IMR-90 (cell line): ENCODE measurements at regions of chr18 and their contacts with region 1.

Region 1: GRCh38 chr18:6543330-6543908 is 128.7 kb upstream of the L3MBTL4 start:
- DNase-seq: peak; percentile 55
- ATAC-seq: peak; percentile 54; the same call in 1 of the 2 replicates
- H3K4me3 ChIP-seq: no peak overlapping the region
- H3K27ac ChIP-seq: no peak overlapping the region
- H3K4me1 ChIP-seq: no peaks in the 10 kb centered on the region; the same call in 1 of the 2 replicates
- H3K27me3 ChIP-seq: no peaks in the 10 kb centered on the region
- CTCF ChIP-seq: peak; percentile 59
- POLR2A ChIP-seq: no peak
- RAD21 ChIP-seq: peak; percentile 70

Region 2: GRCh38 chr18:6569813-6570212 is 26.4 kb after region 1 on chr18:
- CTCF ChIA-PET with region 1: no interaction called
- POLR2A ChIA-PET with region 1: no interaction called
- dilution Hi-C with region 1: no loop called
- in situ Hi-C with region 1: no loop called
- intact Hi-C with region 1: no loop called
- DNase-seq: no peak
- ATAC-seq: no peak
- H3K4me3 ChIP-seq: no peak overlapping the region
- H3K27ac ChIP-seq: no peak overlapping the region
- H3K4me1 ChIP-seq: no peaks in the 10 kb centered on the region; the same call in 1 of the 2 replicates
- H3K27me3 ChIP-seq: peaks cover 2% of the 10 kb centered on the region; the same call in 1 of the 2 replicates
- CTCF ChIP-seq: no peak
- POLR2A ChIP-seq: no peak
- RAD21 ChIP-seq: no peak

Region 3: DNA sequence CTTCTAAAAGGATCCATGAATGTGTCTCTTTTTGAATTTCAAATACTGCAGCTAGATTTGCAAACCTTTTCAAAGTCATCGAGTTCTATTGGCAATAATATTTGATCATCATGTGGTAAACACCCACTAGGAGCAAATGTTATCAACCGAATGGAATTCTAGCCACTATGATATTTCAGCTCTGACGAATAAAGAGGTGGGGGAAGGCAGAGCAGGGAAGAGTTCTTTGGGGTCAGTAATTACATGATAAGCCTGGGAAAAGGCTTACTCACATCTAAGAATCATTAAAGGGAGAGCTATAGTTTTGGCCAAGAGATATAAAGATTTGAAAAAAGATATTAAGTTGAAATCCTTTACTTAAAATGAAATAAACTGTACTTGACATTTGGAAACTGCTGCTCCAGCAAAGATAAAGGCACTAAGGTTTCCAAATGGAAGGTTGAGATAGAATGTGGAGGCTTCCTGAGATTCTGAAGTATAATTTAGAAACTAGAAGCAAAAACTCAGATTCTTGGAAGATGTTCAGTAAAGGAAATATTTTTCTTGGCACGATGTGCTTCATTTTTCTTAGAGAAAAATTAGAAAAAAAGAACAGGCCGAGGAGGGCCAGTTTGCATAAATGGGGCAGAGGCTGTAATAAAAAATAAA is 81.4 kb after region 1 on chr18:
- CTCF ChIA-PET with region 1: no interaction called
- POLR2A ChIA-PET with region 1: no interaction called
- dilution Hi-C with region 1: no loop called
- in situ Hi-C with region 1: no loop called
- intact Hi-C with region 1: loop called (anchors 5 kb)
- DNase-seq: peak; percentile 71
- ATAC-seq: peak; percentile 54
- H3K4me3 ChIP-seq: no peak overlapping the region
- H3K27ac ChIP-seq: peak overlapping the region; percentile 39; the same call in 1 of the 2 replicates
- H3K4me1 ChIP-seq: peaks cover 17% of the 10 kb centered on the region
- H3K27me3 ChIP-seq: no peaks in the 10 kb centered on the region
- CTCF ChIP-seq: no peak
- POLR2A ChIP-seq: no peak
- RAD21 ChIP-seq: no peak

Region 4: GRCh38 chr18:6807515-6808257 is 264.3 kb after region 1 on chr18:
- CTCF ChIA-PET with region 1: no interaction called
- POLR2A ChIA-PET with region 1: no interaction called
- dilution Hi-C with region 1: no loop called
- in situ Hi-C with region 1: no loop called
- intact Hi-C with region 1: loop called (anchors 5 kb)
- DNase-seq: no peak
- ATAC-seq: peak; percentile 29
- H3K4me3 ChIP-seq: no peak overlapping the region
- H3K27ac ChIP-seq: no peak overlapping the region
- H3K4me1 ChIP-seq: peaks cover 3% of the 10 kb centered on the region; the same call in 1 of the 2 replicates
- H3K27me3 ChIP-seq: no peaks in the 10 kb centered on the region
- CTCF ChIP-seq: no peak
- POLR2A ChIP-seq: no peak
- RAD21 ChIP-seq: no peak

Region 5: GRCh38 chr18:6850396-6850795 is 307.0 kb after region 1 on chr18:
- CTCF ChIA-PET with region 1: no interaction called
- POLR2A ChIA-PET with region 1: interaction called, 11 read pairs
- dilution Hi-C with region 1: no loop called
- in situ Hi-C with region 1: no loop called
- intact Hi-C with region 1: no loop called
- DNase-seq: no peak
- ATAC-seq: no peak
- H3K4me3 ChIP-seq: no peak overlapping the region
- H3K27ac ChIP-seq: no peak overlapping the region
- H3K4me1 ChIP-seq: no peaks in the 10 kb centered on the region
- H3K27me3 ChIP-seq: no peaks in the 10 kb centered on the region
- CTCF ChIP-seq: no peak
- POLR2A ChIP-seq: no peak
- RAD21 ChIP-seq: no peak

Region 6: DNA sequence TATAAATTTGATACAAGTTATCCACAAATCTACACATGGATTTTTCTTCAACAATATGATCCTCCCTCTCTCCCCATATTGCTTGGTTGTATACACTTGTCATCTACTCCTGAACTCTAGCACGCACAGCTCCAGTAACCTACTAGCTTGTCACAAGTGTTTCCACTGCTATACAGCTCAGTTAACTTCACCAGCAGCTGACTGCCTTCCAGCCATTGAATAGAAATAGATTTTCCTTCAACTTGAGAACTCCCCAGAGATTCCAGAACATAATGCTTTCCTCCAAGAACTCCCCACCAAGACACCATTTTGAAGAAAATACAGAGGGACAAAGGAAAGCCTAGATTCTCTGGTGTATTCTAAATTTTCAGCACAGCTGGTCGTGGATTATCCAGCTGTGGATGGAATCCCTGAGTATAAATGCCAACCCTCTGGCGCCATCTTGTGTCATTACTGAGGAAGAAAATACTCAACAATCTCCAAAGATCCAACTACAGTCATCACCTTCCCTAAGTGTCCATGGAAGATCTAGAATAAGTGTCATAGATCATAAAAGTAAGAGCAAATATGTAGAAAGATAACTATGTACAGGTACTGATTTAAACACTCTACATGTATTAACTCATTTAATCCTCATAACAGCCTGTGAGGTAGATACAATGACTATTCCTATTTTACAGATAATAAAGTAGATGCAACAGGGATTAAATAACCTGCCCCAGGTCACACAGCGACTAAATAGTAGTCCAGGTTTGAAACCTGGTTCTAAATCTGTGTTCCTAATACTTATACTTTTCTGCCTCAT is 342.8 kb after region 1 on chr18:
- CTCF ChIA-PET with region 1: interaction called, 18 read pairs
- POLR2A ChIA-PET with region 1: no interaction called
- dilution Hi-C with region 1: no loop called
- in situ Hi-C with region 1: no loop called
- intact Hi-C with region 1: loop called (anchors 1 kb)
- DNase-seq: peak; percentile 59
- ATAC-seq: peak; percentile 83
- H3K4me3 ChIP-seq: no peak overlapping the region
- H3K27ac ChIP-seq: no peak overlapping the region; the same call in 1 of the 2 replicates
- H3K4me1 ChIP-seq: peaks cover 3% of the 10 kb centered on the region
- H3K27me3 ChIP-seq: no peaks in the 10 kb centered on the region
- CTCF ChIP-seq: peak; percentile 88
- POLR2A ChIP-seq: 0 out of 2 replicates have a peak, but pooled peaks have one; percentile 40
- RAD21 ChIP-seq: peak; percentile 97

Region 7: GRCh38 chr18:7000484-7001096 is 457.2 kb after region 1 on chr18:
- CTCF ChIA-PET with region 1: no interaction called
- POLR2A ChIA-PET with region 1: no interaction called
- dilution Hi-C with region 1: no loop called
- in situ Hi-C with region 1: no loop called
- intact Hi-C with region 1: loop called (anchors 10 kb)
- DNase-seq: peak; percentile 19
- ATAC-seq: peak; percentile 91
- H3K4me3 ChIP-seq: no peak overlapping the region
- H3K27ac ChIP-seq: no peak overlapping the region
- H3K4me1 ChIP-seq: no peaks in the 10 kb centered on the region
- H3K27me3 ChIP-seq: no peaks in the 10 kb centered on the region
- CTCF ChIP-seq: peak; percentile 50
- POLR2A ChIP-seq: no peak
- RAD21 ChIP-seq: peak; percentile 39

Region 8: DNA sequence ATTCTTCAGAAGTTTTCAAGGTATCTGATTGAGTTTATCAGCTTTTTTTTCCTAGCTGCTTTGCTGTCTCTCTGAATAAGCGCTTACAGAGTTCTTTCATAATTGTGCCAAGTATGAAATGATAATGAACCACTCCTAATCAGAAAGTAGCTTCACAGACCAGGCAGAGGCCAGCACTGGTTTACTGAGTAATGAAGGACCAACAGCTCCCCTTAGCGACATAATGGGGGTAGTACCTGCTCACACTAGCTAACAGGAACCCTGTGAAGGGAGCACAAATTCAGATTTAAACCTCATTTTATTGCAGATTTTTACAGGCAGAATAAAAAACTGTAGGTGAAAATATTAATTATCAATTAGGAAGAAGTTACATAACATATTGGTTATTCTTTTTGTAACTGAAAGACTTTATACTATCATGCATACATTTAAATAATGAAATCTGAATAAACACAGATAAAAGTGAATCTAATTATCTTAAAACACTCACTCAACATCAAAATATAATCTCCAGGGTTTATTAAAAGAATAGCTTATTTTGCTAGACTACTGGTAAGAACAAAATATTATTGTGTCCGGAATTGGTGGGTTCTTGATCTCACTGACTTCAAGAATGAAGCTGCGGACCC is 633.8 kb after region 1 on chr18:
- CTCF ChIA-PET with region 1: no interaction called
- POLR2A ChIA-PET with region 1: no interaction called
- dilution Hi-C with region 1: no loop called
- in situ Hi-C with region 1: no loop called
- intact Hi-C with region 1: loop called (anchors 5 kb)
- DNase-seq: peak; percentile 85
- ATAC-seq: peak; percentile 100
- H3K4me3 ChIP-seq: no peak overlapping the region
- H3K27ac ChIP-seq: no peak overlapping the region
- H3K4me1 ChIP-seq: no peaks in the 10 kb centered on the region; the same call in 1 of the 2 replicates
- H3K27me3 ChIP-seq: no peaks in the 10 kb centered on the region; the same call in 1 of the 2 replicates
- CTCF ChIP-seq: peak; percentile 80
- POLR2A ChIP-seq: no peak
- RAD21 ChIP-seq: peak; percentile 91